BJ (cell line): ENCODE measurements at regions of chr1 and their contacts with region 1.

Region 1: DNA sequence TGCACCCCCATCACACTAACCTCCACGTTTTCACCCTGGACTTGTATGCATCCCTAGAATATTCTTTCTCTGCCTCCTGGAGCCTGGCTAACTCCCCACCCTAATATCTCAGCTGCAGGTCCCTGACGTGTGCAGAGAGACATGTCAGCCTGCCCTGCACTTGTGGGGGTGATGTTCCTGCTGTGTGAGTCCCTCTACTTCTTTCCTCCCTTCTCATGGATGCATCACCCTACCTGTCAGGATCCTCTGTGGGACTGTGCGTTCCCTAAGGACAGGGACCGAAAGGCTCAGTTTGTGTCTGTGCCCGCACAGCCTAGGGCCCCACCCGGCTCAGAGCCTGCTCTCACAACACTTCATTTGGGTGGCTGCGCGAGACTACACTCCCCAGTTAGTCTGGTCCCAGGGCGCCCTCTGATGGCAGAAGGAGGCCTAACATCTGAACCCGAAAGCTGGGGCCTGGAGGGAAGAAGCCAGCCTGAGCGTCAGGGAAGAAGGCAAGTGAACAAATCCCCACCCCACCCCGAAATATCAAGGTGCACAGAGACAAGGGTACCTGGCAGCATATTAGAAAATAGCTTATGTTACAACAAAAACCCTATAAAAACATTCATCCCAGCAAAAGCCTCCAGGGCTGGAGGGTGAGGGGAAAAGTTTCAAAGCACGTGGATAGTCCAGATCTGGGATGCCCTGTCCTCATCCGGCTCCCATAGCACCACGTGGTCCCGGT is 3.7 kb downstream of the CD52 start:
- DNase-seq: peak; percentile 21
- H3K4me3 ChIP-seq: no peak overlapping the region
- H3K27me3 ChIP-seq: 0 out of 2 replicates have a peak, but pooled peaks cover 1% of the 10 kb centered on the region
- CTCF ChIP-seq: peak; percentile 94

Region 2: GRCh38 chr1:26097696-26098095 is 223.8 kb before region 1 on chr1:
- CTCF ChIA-PET with region 1: interaction called, 10 read pairs
- POLR2A ChIA-PET with region 1: no interaction called
- DNase-seq: no peak
- H3K4me3 ChIP-seq: no peak overlapping the region
- H3K27me3 ChIP-seq: peaks cover 8% of the 10 kb centered on the region
- CTCF ChIP-seq: no peak

Region 3: GRCh38 chr1:26233903-26234643 is 87.4 kb before region 1 on chr1 and contains the start of gene CEP85:
- CTCF ChIA-PET with region 1: interaction called, 24 read pairs
- POLR2A ChIA-PET with region 1: no interaction called
- DNase-seq: peak; percentile 70
- H3K4me3 ChIP-seq: peak within 1 kb of the TSS; percentile 64
- H3K27me3 ChIP-seq: no peaks in the 10 kb centered on the region
- CTCF ChIP-seq: peak; percentile 91
- polyA plus RNA-seq, gene CEP85: 9.4 and 10.8 TPM in 2 replicates

Region 4: GRCh38 chr1:26284597-26285360 is 36.7 kb before region 1 on chr1:
- CTCF ChIA-PET with region 1: interaction called, 37 read pairs
- POLR2A ChIA-PET with region 1: no interaction called
- DNase-seq: peak; percentile 72
- H3K4me3 ChIP-seq: no peak overlapping the region
- H3K27me3 ChIP-seq: no peaks in the 10 kb centered on the region
- CTCF ChIP-seq: peak; percentile 73

Region 5: DNA sequence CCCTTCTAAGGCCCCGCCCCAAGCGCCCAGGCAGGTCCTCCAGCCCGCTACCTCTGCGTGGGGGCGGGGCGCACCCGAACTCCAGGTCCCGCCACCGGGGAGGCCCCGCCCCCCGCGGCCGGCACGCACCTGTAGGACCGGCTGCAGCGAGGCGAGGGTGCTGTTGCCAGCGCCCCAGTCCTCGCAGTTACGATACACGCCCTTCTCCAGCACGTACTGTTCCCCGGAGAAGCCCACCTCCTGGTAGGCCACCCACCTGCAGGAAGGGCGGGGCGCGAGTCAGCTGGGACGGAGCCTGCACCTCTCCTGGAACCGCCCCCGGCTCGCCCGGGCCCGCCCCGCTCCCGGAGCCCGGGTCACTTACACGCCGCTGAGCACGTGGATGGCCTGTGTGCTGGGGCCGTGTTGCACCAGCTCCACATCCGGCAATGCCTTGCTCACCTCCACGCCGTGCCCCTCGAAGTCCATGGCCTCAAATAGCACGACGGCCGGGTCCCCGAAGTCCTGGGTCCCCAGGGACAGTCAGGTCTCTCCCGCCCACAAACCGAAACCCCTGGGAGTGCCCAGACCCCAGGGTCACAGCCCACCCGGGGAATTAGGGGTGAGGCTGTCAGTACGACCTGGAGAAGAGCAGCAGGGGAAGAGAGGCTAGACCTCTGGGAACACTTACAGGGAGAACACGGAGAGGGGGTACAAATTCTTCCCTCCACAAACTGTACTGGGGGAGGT is 15.2 kb after region 1 on chr1:
- CTCF ChIA-PET with region 1: interaction called, 14 read pairs
- POLR2A ChIA-PET with region 1: no interaction called
- DNase-seq: no peak
- H3K4me3 ChIP-seq: peak overlapping the region; percentile 61
- H3K27me3 ChIP-seq: peaks cover 8% of the 10 kb centered on the region; the same call in 1 of the 2 replicates
- CTCF ChIP-seq: no peak